Left lung (tissue), 14 donors: ENCODE measurements at regions of chr10 and their contacts with region 1.

Region 1: DNA sequence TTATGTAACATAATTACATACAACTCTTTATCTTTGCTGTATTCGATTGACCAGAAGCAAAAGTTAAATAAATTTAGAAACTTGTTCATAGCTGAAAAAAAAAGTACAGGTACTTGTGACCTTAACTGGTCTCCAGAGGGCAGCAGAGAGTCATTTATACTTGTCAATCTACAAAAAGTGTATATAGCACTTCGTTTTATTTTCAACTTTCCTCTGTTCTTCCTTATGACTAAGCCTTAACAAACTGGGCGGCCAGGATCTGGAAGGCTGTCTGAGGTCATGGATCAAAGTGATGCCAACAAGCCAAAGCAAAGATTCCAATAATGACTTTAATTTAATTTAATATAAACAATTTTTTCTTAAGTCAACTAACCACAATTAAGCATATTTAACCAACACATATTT is 29.8 kb downstream of the C10orf67 start:
- DNase-seq: peak in 2 of 4 donors; percentile 60 to 78
- ATAC-seq: peak; percentile 89
- H3K4me3 ChIP-seq: no peak overlapping the region
- H3K27ac ChIP-seq: no peak overlapping the region
- H3K4me1 ChIP-seq: no peaks in the 10 kb centered on the region
- H3K27me3 ChIP-seq: no peaks in the 10 kb centered on the region
- CTCF ChIP-seq: peak; percentile 61 to 72

Region 2: GRCh38 chr10:23525406-23525805 is 210.6 kb after region 1 on chr10:
- intact Hi-C with region 1: loop called in 1 of 2 experiments (anchors 5 kb)
- DNase-seq: peak in 1 of 4 donors; percentile 19
- ATAC-seq: peak; percentile 92
- H3K4me3 ChIP-seq: no peak overlapping the region
- H3K27ac ChIP-seq: no peak overlapping the region
- H3K4me1 ChIP-seq: no peaks in the 10 kb centered on the region
- H3K27me3 ChIP-seq: no peaks in the 10 kb centered on the region
- CTCF ChIP-seq: peak; percentile 12 to 36

Region 3: GRCh38 chr10:23702977-23703414 is 388.2 kb after region 1 on chr10:
- intact Hi-C with region 1: loop called in 1 of 2 experiments (anchors 10 kb)
- DNase-seq: peak in 2 of 4 donors; percentile 31 to 61
- ATAC-seq: peak; percentile 98
- H3K4me3 ChIP-seq: no peak overlapping the region
- H3K27ac ChIP-seq: no peak overlapping the region
- H3K4me1 ChIP-seq: no peaks in the 10 kb centered on the region
- H3K27me3 ChIP-seq: peaks cover 0 to 8% of the 10 kb centered on the region in 2 donors
- CTCF ChIP-seq: peak; percentile 49 to 73